Spleen (tissue), 13 donors: ENCODE measurements at regions of chr11 and their contacts with region 1.

Region 1: GRCh38 chr11:43944761-43945311 is 2.4 kb downstream of the C11orf96 start:
- DNase-seq: peak; percentile 91
- H3K4me3 ChIP-seq: peak overlapping the region; percentile 51 to 78 (median 56)
- H3K27ac ChIP-seq: peak overlapping the region in 7 of 8 donors; percentile 36 to 86 (median 80)
- H3K4me1 ChIP-seq: peaks cover 8 to 42% (median 36%) of the 10 kb centered on the region in 6 donors
- H3K27me3 ChIP-seq: peaks cover 0 to 80% (median 29%) of the 10 kb centered on the region in 7 donors
- CTCF ChIP-seq: peak; percentile 31 to 82 (median 66)
- POLR2A ChIP-seq: peak in 1 of 3 donors; percentile 12

Region 2: GRCh38 chr11:43830928-43831440 is 113.9 kb before region 1 on chr11:
- intact Hi-C with region 1: no loop called
- DNase-seq: no peak
- H3K4me3 ChIP-seq: no peak overlapping the region
- H3K27ac ChIP-seq: no peak overlapping the region
- H3K4me1 ChIP-seq: peaks cover 0 to 8% (median 2%) of the 10 kb centered on the region in 6 donors
- H3K27me3 ChIP-seq: no peaks in the 10 kb centered on the region
- CTCF ChIP-seq: no peak
- POLR2A ChIP-seq: no peak

Region 3: GRCh38 chr11:44036811-44037657 is 92.2 kb after region 1 on chr11:
- intact Hi-C with region 1: loop called (anchors 5 kb)
- DNase-seq: peak; percentile 78
- H3K4me3 ChIP-seq: no peak overlapping the region
- H3K27ac ChIP-seq: peak overlapping the region in 1 of 8 donors; percentile 7
- H3K4me1 ChIP-seq: peaks cover 0 to 6% (median 0%) of the 10 kb centered on the region in 6 donors
- H3K27me3 ChIP-seq: peaks cover 0 to 11% (median 0%) of the 10 kb centered on the region in 7 donors
- CTCF ChIP-seq: peak; percentile 27 to 78 (median 61)
- POLR2A ChIP-seq: no peak

Region 4: GRCh38 chr11:45319077-45319476 is 1374.2 kb after region 1 on chr11:
- intact Hi-C with region 1: no loop called
- DNase-seq: no peak
- H3K4me3 ChIP-seq: no peak overlapping the region
- H3K27ac ChIP-seq: no peak overlapping the region
- H3K4me1 ChIP-seq: no peaks in the 10 kb centered on the region
- H3K27me3 ChIP-seq: peaks cover 0 to 49% (median 0%) of the 10 kb centered on the region in 7 donors
- CTCF ChIP-seq: no peak
- POLR2A ChIP-seq: no peak